ENCODE measurements at regions of chr10 and their contacts with region 1.

Region 1: DNA sequence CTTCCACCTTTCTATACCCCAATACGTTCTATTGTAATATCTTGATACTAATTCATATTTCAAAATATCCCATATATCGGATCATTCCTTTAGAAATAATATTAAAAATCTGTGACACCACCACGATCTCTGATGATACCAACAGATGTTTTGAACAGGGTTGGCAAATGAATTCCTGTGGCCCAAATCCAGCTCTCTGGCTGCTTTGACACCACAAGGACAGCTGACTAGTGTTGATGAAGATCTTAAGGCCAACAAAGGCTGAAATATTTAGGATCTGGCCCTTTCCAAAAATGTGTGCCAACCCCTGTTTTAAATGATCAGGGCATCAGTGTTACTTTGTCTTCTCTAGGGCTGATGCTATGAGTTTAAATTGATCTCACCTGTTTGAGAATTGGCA is 380.7 kb upstream of the PFKP start:
- DNase-seq: no peak
- H3K4me3 ChIP-seq: no peak overlapping the region
- H3K4me3 Mint-ChIP-seq: no peak overlapping the region
- H3K27ac ChIP-seq: no peak overlapping the region
- H3K27ac Mint-ChIP-seq: no peak overlapping the region
- H3K4me1 ChIP-seq: no peaks in the 10 kb centered on the region
- H3K4me1 Mint-ChIP-seq: no peaks in the 10 kb centered on the region
- H3K27me3 ChIP-seq: no peaks in the 10 kb centered on the region
- H3K27me3 Mint-ChIP-seq: no peaks in the 10 kb centered on the region
- CTCF ChIP-seq: no peak

Region 2: DNA sequence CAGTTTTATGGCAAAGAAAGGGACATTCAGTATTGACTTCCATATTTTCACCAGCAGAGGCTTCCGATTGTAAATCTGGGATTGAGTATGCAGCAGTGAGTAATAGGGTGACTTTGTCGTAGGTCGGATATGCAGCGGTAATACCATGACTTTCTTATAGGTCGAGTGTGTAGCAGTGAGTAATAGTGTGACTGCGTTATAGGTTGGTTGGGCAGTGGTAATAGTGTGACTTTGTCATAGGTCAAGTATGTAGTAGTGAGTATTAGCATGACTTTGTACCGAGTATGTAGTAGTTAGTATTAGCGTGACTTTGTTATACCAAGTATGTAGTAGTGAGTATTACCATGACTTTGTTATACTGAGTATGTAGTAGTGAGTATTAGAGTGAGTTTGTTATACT is 681.1 kb before region 1 on chr10:
- intact Hi-C with region 1: loop called in 1 of 2 experiments (anchors 5 kb)
- DNase-seq: no peak
- H3K4me3 ChIP-seq: no peak overlapping the region
- H3K4me3 Mint-ChIP-seq: no peak overlapping the region
- H3K27ac ChIP-seq: no peak overlapping the region
- H3K27ac Mint-ChIP-seq: no peak overlapping the region
- H3K4me1 ChIP-seq: no peaks in the 10 kb centered on the region
- H3K4me1 Mint-ChIP-seq: no peaks in the 10 kb centered on the region
- H3K27me3 ChIP-seq: no peaks in the 10 kb centered on the region
- H3K27me3 Mint-ChIP-seq: peaks cover 0 to 2% (median 1%) of the 10 kb centered on the region in 3 donors
- CTCF ChIP-seq: no peak

Measured in CD14-positive monocyte (primary cell).